ENCODE measurements at regions of chr10 and their contacts with region 1.

Region 1: DNA sequence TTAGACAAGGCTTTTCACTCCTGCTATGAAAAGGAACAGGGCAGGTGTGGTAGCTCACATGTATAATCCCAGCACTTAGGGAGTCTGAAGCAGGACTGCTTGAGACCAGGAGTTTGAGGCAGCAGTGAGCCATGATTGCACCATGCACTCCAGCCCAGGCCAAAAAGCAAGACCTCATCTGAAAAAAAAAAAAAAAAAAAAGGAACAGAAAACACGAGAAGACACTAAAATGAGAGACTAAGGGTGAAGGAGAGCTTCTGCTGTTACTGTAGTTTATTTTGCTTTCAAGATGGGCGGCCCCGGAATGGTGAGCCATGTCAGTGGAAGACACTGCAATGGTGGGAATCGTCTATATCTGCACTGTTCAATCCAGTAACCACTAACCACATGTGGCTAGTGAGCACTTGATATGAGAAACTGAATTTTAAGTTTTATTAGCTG is 9.9 kb downstream of the PIP4K2A start:
- DNase-seq: no peak
- ATAC-seq: peak; percentile 33
- H3K4me3 ChIP-seq: no peak overlapping the region
- H3K4me3 Mint-ChIP-seq: peak overlapping the region in 9 of 10 donors; percentile 14 to 70 (median 60)
- H3K27ac ChIP-seq: peak overlapping the region; percentile 30
- H3K27ac Mint-ChIP-seq: peak overlapping the region in 8 of 9 donors; percentile 29 to 92 (median 82)
- H3K4me1 ChIP-seq: peaks cover 59 to 93% of the 10 kb centered on the region in 2 donors
- H3K4me1 Mint-ChIP-seq: peaks cover 80 to 100% (median 99%) of the 10 kb centered on the region in 7 donors
- H3K27me3 ChIP-seq: no peaks in the 10 kb centered on the region
- H3K27me3 Mint-ChIP-seq: no peaks in the 10 kb centered on the region

Region 2: DNA sequence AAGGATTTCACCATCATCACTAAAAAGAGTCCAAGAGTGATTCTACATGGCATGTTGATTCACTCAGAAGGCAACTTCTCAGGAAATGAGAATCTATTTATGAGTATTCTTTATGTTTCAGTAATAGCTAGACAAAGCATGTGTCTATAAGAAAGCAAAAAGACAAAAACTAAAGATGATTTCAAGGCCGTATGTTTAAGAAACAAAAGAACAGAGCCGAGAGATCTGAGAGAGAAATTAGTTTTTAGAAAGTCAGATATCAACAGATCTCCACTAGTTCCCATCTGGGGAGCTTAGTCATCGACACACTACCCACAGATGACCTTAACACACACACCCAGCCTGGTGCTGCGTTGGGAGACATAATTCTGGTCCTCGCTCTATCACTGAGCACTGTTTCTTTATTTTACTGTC is 11.1 kb before region 1 on chr10:
- CTCF ChIA-PET with region 1: no interaction called
- POLR2A ChIA-PET with region 1: interaction called, 8 read pairs
- intact Hi-C with region 1: loop called (anchors 1 to 2 kb)
- DNase-seq: no peak
- ATAC-seq: peak; percentile 82
- H3K4me3 ChIP-seq: no peak overlapping the region
- H3K4me3 Mint-ChIP-seq: peak overlapping the region in 8 of 10 donors; percentile 1 to 58 (median 41)
- H3K27ac ChIP-seq: no peak overlapping the region
- H3K27ac Mint-ChIP-seq: peak overlapping the region; percentile 21 to 95 (median 82)
- H3K4me1 ChIP-seq: peaks cover 54 to 86% of the 10 kb centered on the region in 2 donors
- H3K4me1 Mint-ChIP-seq: peaks cover 53 to 97% (median 94%) of the 10 kb centered on the region in 7 donors
- H3K27me3 ChIP-seq: no peaks in the 10 kb centered on the region
- H3K27me3 Mint-ChIP-seq: no peaks in the 10 kb centered on the region

Measured in naive thymus-derived CD4-positive, alpha-beta T cell (primary cell).